A673 (cell line): ENCODE measurements at regions of chr1 and their contacts with region 1.

Region 1: GRCh38 chr1:47179017-47179987 is 10.5 kb downstream of the PDZK1IP1 start:
- DNase-seq: peak; percentile 95
- H3K4me3 ChIP-seq: peak overlapping the region; percentile 42
- H3K27ac ChIP-seq: no peak overlapping the region
- H3K4me1 ChIP-seq: no peaks in the 10 kb centered on the region
- H3K27me3 ChIP-seq: peaks cover 10% of the 10 kb centered on the region
- CTCF ChIP-seq: peak; percentile 93

Region 2: DNA sequence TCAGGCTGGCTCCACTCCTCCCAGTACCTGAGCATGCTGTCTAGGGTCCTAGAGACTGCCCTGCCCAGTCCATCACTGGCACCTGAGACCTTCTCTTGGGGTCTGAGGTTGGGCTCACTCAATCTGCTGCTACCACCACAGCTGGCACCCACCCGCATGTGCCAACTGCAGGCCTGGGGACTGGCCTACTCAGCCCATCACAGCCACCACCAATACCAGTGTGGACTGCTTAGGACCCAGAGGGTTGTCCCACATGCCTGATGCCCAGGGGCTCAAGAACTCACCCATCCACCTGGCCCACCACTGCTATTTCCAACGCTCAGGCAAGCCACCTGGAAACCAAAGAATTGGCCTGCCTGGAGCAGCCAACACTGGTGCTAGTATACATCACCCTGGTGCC is 317.0 kb before region 1 on chr1:
- CTCF ChIA-PET with region 1: no interaction called
- POLR2A ChIA-PET with region 1: no interaction called
- intact Hi-C with region 1: loop called (anchors 10 kb)
- DNase-seq: no peak
- H3K4me3 ChIP-seq: no peak overlapping the region
- H3K27ac ChIP-seq: no peak overlapping the region
- H3K4me1 ChIP-seq: no peaks in the 10 kb centered on the region
- H3K27me3 ChIP-seq: peaks cover 33% of the 10 kb centered on the region
- CTCF ChIP-seq: no peak

Region 3: DNA sequence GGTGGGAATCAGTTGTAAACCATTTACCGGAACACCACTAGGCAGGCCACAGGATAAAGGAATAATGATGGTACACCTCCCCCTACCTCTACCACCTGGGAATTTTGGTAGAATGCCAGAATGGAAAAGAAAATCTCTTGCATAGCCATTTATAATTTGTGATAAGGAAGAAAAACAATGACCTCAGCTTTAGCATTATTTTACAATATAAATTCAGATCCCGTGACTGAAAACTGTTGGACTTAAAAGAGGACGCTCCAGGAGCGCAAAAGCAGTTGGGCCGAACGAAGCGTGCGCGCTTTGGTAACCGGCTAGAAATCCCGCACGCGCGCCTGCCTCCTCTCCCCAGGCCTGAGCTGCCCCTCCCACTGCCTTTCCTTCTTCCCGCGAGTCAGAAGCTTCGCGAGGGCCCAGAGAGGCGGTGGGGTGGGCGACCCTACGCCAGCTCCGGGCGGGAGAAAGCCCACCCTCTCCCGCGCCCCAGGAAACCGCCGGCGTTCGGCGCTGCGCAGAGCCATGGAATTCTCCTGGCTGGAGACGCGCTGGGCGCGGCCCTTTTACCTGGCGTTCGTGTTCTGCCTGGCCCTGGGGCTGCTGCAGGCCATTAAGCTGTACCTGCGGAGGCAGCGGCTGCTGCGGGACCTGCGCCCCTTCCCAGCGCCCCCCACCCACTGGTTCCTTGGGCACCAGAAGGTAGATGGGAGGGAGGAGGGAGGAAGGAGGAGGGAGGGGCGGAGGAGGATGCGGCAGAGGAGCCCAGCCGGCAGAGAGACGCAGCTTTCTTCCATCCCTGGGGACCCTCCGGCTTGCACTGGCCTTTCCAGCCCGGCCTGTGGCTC is 155.8 kb before region 1 on chr1 and contains the start of gene CYP4X1:
- CTCF ChIA-PET with region 1: no interaction called
- POLR2A ChIA-PET with region 1: no interaction called
- intact Hi-C with region 1: no loop called
- DNase-seq: no peak
- H3K4me3 ChIP-seq: no peak within 1 kb of the TSS
- H3K27ac ChIP-seq: no peak within 1 kb of the TSS
- H3K4me1 ChIP-seq: no peaks in the 10 kb centered on the region
- H3K27me3 ChIP-seq: peaks cover 49% of the 10 kb centered on the region
- CTCF ChIP-seq: no peak
- total RNA-seq, gene CYP4X1: not detected in 2 replicates

Region 4: GRCh38 chr1:47262787-47263413 is 83.6 kb after region 1 on chr1:
- CTCF ChIA-PET with region 1: interaction called, 8 read pairs
- POLR2A ChIA-PET with region 1: no interaction called
- intact Hi-C with region 1: loop called (anchors 1 kb)
- DNase-seq: peak; percentile 59
- H3K4me3 ChIP-seq: no peak overlapping the region
- H3K27ac ChIP-seq: no peak overlapping the region
- H3K4me1 ChIP-seq: no peaks in the 10 kb centered on the region
- H3K27me3 ChIP-seq: no peaks in the 10 kb centered on the region
- CTCF ChIP-seq: peak; percentile 64

Region 5: GRCh38 chr1:47313915-47314664 is 134.8 kb after region 1 on chr1 and contains the start of gene STIL:
- CTCF ChIA-PET with region 1: interaction called, 8 read pairs
- POLR2A ChIA-PET with region 1: interaction called, 10 read pairs
- intact Hi-C with region 1: no loop called
- DNase-seq: peak; percentile 100
- H3K4me3 ChIP-seq: peak within 1 kb of the TSS; percentile 73
- H3K27ac ChIP-seq: peak within 1 kb of the TSS; percentile 85
- H3K4me1 ChIP-seq: no peaks in the 10 kb centered on the region
- H3K27me3 ChIP-seq: no peaks in the 10 kb centered on the region
- CTCF ChIP-seq: no peak
- total RNA-seq, gene STIL: 39.3 and 43.4 TPM in 2 replicates

Region 6: DNA sequence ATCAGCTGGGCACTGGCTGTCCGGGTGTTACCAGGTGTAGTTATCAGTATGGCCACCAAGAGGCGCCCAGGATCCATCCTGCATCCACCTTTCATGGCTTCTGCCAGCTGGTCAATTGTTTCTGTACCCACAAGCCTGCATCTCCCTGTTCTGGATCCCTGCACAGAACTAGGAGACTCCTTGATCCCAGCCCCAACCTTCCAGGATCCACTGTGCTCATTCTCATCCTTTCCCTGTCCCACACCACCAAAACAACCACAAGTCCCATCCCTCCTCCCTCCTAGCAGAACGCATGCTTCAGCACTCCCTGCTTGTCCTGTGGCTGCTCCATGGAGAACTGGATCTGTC is 209.6 kb after region 1 on chr1:
- CTCF ChIA-PET with region 1: interaction called, 10 read pairs
- POLR2A ChIA-PET with region 1: no interaction called
- intact Hi-C with region 1: no loop called
- DNase-seq: peak; percentile 66
- H3K4me3 ChIP-seq: no peak overlapping the region
- H3K27ac ChIP-seq: no peak overlapping the region
- H3K4me1 ChIP-seq: no peaks in the 10 kb centered on the region
- H3K27me3 ChIP-seq: peaks cover 12% of the 10 kb centered on the region
- CTCF ChIP-seq: peak; percentile 79

Region 7: DNA sequence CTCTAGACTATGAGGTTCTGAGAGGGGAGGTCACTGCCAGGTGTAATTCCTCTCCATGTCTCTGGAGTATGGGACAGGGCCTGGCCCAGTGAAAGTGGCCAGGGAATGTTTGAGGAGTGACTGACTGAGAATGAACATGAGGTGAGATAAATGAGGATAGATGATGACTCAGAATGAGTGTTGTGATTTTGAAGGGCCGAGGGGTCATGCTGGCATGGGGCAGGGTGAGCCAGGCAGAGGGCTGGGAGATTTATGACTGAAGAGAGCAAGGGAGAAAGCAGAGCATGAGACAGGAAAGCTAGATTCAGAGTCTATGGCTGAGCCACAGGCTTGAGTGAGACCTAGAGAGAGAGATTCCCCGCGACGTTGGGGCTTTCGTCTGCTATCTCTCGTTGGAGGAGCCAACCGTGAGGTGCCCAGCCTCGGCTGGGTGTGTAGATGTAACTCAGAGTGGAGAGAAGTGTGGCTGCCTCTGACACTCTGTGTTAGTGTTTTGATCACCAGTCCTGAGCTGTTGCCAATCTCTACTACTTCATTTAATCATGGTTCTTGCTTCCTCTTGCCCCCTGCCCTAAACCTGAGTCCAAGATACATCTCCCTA is 308.6 kb after region 1 on chr1:
- CTCF ChIA-PET with region 1: no interaction called
- POLR2A ChIA-PET with region 1: no interaction called
- intact Hi-C with region 1: no loop called
- DNase-seq: no peak
- H3K4me3 ChIP-seq: no peak overlapping the region
- H3K27ac ChIP-seq: no peak overlapping the region
- H3K4me1 ChIP-seq: no peaks in the 10 kb centered on the region
- H3K27me3 ChIP-seq: peaks cover 29% of the 10 kb centered on the region
- CTCF ChIP-seq: no peak

Region 8: DNA sequence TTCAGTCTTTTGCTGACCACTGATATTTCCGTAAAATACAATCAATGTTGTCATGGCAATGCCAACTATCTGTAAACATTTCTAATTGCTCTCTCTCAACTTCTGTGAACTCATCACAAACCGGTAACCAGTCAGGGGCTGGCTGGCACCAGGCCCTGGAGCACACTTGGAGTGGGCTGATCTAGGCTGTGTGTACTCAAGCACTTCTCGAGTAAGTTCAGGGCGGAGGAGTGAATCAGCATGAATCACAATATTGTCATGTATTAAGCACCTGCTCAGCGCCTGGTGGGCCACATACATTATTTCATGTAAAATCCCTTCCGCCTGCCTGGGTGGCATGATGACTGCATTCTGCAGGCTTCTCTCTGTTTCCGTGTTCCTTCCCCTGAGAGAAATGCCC is 470.9 kb after region 1 on chr1:
- CTCF ChIA-PET with region 1: interaction called, 19 read pairs
- POLR2A ChIA-PET with region 1: no interaction called
- intact Hi-C with region 1: no loop called
- DNase-seq: peak; percentile 50
- H3K4me3 ChIP-seq: no peak overlapping the region
- H3K27ac ChIP-seq: no peak overlapping the region
- H3K4me1 ChIP-seq: no peaks in the 10 kb centered on the region
- H3K27me3 ChIP-seq: no peaks in the 10 kb centered on the region
- CTCF ChIP-seq: no peak

Region 9: DNA sequence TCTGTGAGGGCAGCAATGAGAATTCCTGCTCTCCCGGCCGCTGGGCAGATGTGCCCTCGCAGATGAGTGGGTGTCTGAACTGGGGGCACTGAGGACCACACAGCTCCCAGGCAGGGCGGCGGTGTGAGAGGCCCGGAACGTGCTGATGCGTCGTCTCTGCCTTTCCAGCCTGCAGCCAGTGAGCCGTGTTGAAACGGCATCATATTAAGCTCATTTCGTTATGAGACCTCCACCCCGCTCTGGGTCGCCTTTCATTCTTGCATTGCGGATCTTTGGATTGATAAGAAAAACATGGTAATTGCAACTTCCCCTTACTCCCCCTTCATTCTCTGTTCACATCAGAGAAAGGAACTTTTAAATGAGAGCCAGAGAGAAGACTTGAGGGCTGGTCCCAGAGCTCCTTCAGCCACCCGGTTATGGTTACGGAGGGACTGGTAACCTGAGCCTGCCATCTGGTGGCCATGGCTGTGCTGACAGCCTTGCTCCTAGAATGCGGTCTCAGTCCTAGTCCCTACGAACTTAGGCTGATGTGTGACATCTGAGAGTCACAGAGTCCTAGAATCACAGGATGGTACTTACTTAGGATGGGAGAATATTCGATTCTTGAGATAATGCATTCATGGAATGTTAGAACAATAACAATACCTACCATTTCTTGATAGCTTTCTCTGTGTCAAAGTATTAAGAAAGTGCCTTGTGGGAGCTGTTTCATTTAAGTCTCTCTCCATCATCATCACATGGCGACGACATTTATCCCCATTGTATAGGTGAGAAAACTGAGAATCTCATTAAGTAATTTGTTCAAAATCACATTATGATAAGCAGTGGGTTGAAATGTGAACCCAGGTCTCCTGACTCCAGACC is 546.9 kb after region 1 on chr1:
- CTCF ChIA-PET with region 1: interaction called, 12 read pairs
- POLR2A ChIA-PET with region 1: no interaction called
- intact Hi-C with region 1: no loop called
- DNase-seq: peak; percentile 81
- H3K4me3 ChIP-seq: no peak overlapping the region
- H3K27ac ChIP-seq: no peak overlapping the region
- H3K4me1 ChIP-seq: no peaks in the 10 kb centered on the region
- H3K27me3 ChIP-seq: peaks cover 33% of the 10 kb centered on the region
- CTCF ChIP-seq: peak; percentile 91